ENCODE measurements at regions of chr1 and their contacts with region 1.

Region 1: GRCh38 chr1:167533851-167534300 is 15.5 kb upstream of the CD247 start:
- DNase-seq: peak; percentile 69
- H3K4me3 ChIP-seq: no peak overlapping the region
- H3K27ac ChIP-seq: no peak overlapping the region
- H3K4me1 ChIP-seq: no peaks in the 10 kb centered on the region
- H3K27me3 ChIP-seq: no peaks in the 10 kb centered on the region
- CTCF ChIP-seq: peak; percentile 88

Region 2: DNA sequence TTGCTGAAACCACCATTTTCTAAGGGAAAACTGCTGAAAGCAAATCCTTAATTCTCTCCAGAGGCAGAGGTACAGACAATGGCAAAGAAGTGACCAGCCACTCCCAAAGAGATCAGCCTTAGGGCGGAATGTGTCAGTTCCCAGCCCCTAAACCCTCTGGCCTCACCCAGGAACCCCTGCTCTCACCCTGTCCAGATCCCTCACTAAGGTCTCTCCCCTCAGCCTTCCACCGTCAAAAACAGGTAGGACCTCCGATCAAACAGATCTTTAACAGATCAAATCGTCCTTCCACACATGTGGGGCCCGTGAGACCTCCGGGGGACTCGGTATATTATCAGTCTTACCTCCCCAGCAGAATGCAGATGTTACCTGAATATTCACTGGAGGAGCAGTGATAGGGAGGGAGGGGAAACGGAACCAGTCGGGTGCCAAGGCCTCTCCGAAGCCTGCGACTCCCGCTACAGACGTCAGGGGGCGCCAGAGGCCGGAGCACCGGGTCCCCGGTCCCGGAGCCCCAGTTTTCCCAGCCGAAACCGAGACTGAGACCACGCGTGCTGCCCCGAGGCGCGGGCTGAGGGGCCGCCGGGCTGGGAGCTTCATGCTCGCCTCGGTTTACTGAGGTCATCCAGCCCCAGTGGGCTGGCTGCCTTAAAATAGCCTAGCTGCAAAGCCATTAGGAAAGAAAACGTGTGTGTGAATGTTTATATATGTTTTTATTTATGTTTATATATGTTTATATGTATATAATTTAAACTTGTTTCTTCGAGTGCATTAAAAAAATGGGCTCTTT is 467.3 kb before region 1 on chr1:
- intact Hi-C with region 1: loop called (anchors 5 kb)
- DNase-seq: peak; percentile 86
- H3K4me3 ChIP-seq: no peak overlapping the region
- H3K27ac ChIP-seq: peak overlapping the region; percentile 66
- H3K4me1 ChIP-seq: peaks cover 8% of the 10 kb centered on the region
- H3K27me3 ChIP-seq: no peaks in the 10 kb centered on the region
- CTCF ChIP-seq: peak; percentile 98

Region 3: GRCh38 chr1:167268398-167268787 is 265.5 kb before region 1 on chr1:
- intact Hi-C with region 1: loop called (anchors 5 kb)
- DNase-seq: no peak
- H3K4me3 ChIP-seq: no peak overlapping the region
- H3K27ac ChIP-seq: no peak overlapping the region
- H3K4me1 ChIP-seq: no peaks in the 10 kb centered on the region
- H3K27me3 ChIP-seq: no peaks in the 10 kb centered on the region
- CTCF ChIP-seq: no peak

Region 4: GRCh38 chr1:167401260-167401873 is 132.5 kb before region 1 on chr1:
- intact Hi-C with region 1: loop called (anchors 5 kb)
- DNase-seq: peak; percentile 61
- H3K4me3 ChIP-seq: no peak overlapping the region
- H3K27ac ChIP-seq: no peak overlapping the region
- H3K4me1 ChIP-seq: no peaks in the 10 kb centered on the region
- H3K27me3 ChIP-seq: no peaks in the 10 kb centered on the region
- CTCF ChIP-seq: peak; percentile 45

Region 5: DNA sequence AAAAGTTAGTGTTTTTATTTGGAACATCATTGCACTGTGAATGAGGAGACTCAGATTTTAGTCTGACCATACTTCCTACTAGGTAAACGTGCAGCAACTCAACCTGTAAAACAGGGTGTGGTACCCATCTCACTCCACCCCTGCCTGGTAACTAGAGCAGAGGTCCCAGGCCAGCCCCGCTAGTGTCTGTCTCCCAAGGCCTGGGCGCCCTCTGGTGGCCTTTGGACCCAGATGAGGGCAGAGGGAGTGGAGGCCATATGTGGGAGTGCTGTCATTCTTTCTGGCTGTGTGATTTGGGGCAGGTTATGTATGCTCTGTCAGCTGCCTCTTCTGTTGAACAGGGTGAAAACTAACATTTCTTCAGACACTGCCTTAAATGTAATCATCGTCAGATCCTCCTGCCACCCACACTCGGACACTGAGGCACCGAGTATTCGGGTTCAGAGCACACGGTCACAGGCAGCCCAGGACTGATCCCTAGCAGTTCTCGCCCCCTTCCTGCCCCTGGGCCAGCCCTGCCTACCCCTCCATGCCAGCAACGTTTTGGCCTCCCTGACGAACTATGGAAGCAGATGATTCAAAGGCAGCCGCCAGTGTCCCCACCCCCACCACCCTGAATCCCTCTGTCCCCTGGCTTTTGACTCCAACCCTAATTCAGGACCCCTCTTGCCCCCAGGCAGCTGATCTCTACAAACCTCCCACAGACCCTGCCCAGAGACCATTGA is 91.6 kb before region 1 on chr1:
- intact Hi-C with region 1: loop called (anchors 10 kb)
- DNase-seq: peak; percentile 98
- H3K4me3 ChIP-seq: no peak overlapping the region
- H3K27ac ChIP-seq: peak overlapping the region; percentile 43
- H3K4me1 ChIP-seq: peaks cover 3% of the 10 kb centered on the region
- H3K27me3 ChIP-seq: no peaks in the 10 kb centered on the region
- CTCF ChIP-seq: peak; percentile 80

Measured in colonic mucosa (tissue), 4 donors.